Naive thymus-derived CD4-positive, alpha-beta T cell (primary cell): ENCODE measurements at regions of chr22 and their contacts with region 1.

Region 1: GRCh38 chr22:26364066-26365015 is 64.7 kb upstream of the ASPHD2 start:
- DNase-seq: peak in 8 of 9 donors; percentile 33 to 56 (median 47)
- ATAC-seq: peak; percentile 84
- H3K4me3 ChIP-seq: no peak overlapping the region
- H3K4me3 Mint-ChIP-seq: no peak overlapping the region
- H3K27ac ChIP-seq: no peak overlapping the region
- H3K27ac Mint-ChIP-seq: no peak overlapping the region
- H3K4me1 ChIP-seq: no peaks in the 10 kb centered on the region
- H3K4me1 Mint-ChIP-seq: peaks cover 4 to 13% (median 6%) of the 10 kb centered on the region in 7 donors
- H3K27me3 ChIP-seq: peaks cover 0 to 3% of the 10 kb centered on the region in 2 donors
- H3K27me3 Mint-ChIP-seq: peaks cover 7 to 18% (median 12%) of the 10 kb centered on the region in 5 donors

Region 2: GRCh38 chr22:26196657-26197056 is 167.7 kb before region 1 on chr22:
- CTCF ChIA-PET with region 1: no interaction called
- POLR2A ChIA-PET with region 1: no interaction called
- intact Hi-C with region 1: no loop called
- DNase-seq: no peak
- ATAC-seq: no peak
- H3K4me3 ChIP-seq: no peak overlapping the region
- H3K4me3 Mint-ChIP-seq: no peak overlapping the region
- H3K27ac ChIP-seq: no peak overlapping the region
- H3K27ac Mint-ChIP-seq: no peak overlapping the region
- H3K4me1 ChIP-seq: no peaks in the 10 kb centered on the region
- H3K4me1 Mint-ChIP-seq: no peaks in the 10 kb centered on the region
- H3K27me3 ChIP-seq: no peaks in the 10 kb centered on the region
- H3K27me3 Mint-ChIP-seq: peaks cover 5 to 43% (median 31%) of the 10 kb centered on the region in 5 donors

Region 3: DNA sequence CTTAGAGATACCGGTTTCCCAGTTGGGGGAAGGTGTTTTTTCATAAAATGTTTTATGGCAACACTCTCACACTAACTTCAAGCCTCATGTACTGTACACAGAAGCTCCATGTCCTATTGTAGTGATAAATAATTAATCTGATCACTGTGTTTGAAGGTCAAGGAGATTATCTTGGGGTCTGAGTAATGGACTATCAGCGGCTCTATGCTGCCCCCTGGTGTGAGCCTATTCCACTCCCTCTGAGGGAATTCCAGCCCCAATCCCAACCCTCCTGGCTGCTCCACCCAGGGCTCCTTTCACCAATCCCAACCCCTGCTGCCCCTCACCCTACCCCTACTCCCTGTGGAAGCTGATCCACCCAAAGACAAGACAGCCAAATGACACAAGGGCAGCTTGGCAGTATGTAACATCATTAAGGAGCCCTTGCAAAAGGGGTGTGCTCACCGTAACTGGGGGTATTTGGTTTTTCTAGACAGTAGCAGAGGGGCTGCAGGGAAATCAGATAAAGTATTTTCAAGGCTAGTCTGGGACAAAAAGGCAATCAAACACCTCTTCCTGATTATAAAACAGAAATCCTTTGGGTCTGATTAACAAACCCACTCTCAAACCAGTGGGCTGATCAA is 97.0 kb after region 1 on chr22:
- CTCF ChIA-PET with region 1: interaction called, 15 read pairs
- POLR2A ChIA-PET with region 1: interaction called, 3 read pairs
- intact Hi-C with region 1: loop called (anchors 1 kb)
- DNase-seq: peak in 4 of 9 donors; percentile 15 to 45 (median 30)
- ATAC-seq: peak; percentile 66
- H3K4me3 ChIP-seq: no peak overlapping the region
- H3K4me3 Mint-ChIP-seq: no peak overlapping the region
- H3K27ac ChIP-seq: no peak overlapping the region
- H3K27ac Mint-ChIP-seq: peak overlapping the region in 2 of 9 donors; percentile 42 to 56
- H3K4me1 ChIP-seq: no peaks in the 10 kb centered on the region
- H3K4me1 Mint-ChIP-seq: peaks cover 0 to 6% (median 4%) of the 10 kb centered on the region in 7 donors
- H3K27me3 ChIP-seq: no peaks in the 10 kb centered on the region
- H3K27me3 Mint-ChIP-seq: no peaks in the 10 kb centered on the region

Region 4: DNA sequence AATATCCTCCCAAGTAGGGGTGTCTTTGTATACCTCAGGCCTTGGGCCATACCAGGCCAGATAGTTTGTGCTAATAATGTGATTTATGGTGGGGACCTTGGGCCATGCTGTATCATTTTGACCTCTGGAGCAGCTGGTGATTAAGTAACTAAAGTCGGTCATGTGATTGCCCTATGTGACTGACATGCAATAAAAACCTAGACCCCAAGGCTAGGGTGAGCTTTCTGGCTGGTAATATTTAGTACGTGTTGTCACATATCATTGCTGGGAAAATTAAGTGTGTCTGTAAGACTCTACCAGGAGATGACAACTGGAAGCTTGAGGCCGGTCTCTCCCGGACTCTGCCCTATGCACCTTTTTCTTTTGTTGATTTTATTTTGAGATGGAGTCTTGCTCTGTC is 160.5 kb after region 1 on chr22:
- CTCF ChIA-PET with region 1: no interaction called
- POLR2A ChIA-PET with region 1: no interaction called
- intact Hi-C with region 1: no loop called
- DNase-seq: no peak
- ATAC-seq: no peak
- H3K4me3 ChIP-seq: no peak overlapping the region
- H3K4me3 Mint-ChIP-seq: no peak overlapping the region
- H3K27ac ChIP-seq: no peak overlapping the region
- H3K27ac Mint-ChIP-seq: no peak overlapping the region
- H3K4me1 ChIP-seq: no peaks in the 10 kb centered on the region
- H3K4me1 Mint-ChIP-seq: peaks cover 0 to 4% (median 0%) of the 10 kb centered on the region in 7 donors
- H3K27me3 ChIP-seq: no peaks in the 10 kb centered on the region
- H3K27me3 Mint-ChIP-seq: no peaks in the 10 kb centered on the region